Ovary (tissue), 10 donors: ENCODE measurements at regions of chr16 and their contacts with region 1.

Region 1: DNA sequence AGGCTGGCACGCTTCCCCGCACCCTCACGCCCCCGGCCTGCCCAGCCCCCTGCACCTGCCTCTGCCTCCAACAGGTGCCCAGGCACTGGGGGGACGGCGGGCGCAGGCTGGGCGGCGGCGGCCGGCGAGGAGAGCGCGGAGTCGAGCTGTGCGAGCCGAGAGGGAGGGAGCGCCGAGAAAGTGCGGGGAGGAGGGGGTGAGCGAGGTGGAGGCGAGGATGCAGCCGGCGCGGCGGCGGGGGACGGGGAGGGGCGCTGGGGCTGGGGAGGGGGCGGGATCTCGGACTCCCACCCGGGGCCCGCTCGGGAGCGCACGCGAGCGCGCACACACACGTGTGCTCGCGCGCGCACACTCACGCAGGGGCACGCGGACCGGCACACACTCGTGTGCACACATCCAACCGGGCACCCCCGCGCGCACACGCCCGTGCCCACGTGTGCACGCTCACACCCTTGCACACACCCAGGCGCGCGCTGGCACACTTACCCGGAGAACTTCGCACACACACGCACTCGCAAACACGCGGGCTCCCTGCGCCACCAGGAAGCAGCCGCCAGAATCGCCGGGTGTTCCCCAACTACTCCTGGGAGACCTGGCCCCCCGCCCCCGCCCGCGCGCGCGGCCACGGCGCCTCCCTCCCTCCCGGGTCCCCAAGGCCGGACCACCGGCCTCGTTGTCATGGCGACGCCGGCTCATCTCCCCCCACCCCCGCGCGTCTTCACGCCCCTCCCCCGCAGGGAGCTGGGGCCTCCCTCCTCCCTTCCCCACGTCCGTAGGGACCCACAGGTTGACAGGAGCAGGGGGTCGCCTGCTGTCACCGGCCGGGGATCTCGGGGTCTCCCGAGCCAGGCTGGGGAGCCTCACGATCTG is at the start of gene DOC2A:
- DNase-seq: peak in 1 of 5 donors; percentile 57
- H3K4me3 ChIP-seq: peak within 1 kb of the TSS; percentile 29
- H3K27ac ChIP-seq: no peak within 1 kb of the TSS
- H3K4me1 ChIP-seq: no peaks in the 10 kb centered on the region
- H3K27me3 ChIP-seq: no peaks in the 10 kb centered on the region
- CTCF ChIP-seq: no peak
- EP300 ChIP-seq: no peak
- POLR2A ChIP-seq: no peak
- total RNA-seq, gene DOC2A: 1.4 to 7.2 (median 4.7) TPM

Region 2: GRCh38 chr16:29883987-29884386 is 127.1 kb before region 1 on chr16:
- intact Hi-C with region 1: loop called in 1 of 4 experiments (anchors 10 kb)
- DNase-seq: no peak
- H3K4me3 ChIP-seq: no peak overlapping the region
- H3K27ac ChIP-seq: no peak overlapping the region
- H3K4me1 ChIP-seq: no peaks in the 10 kb centered on the region
- H3K27me3 ChIP-seq: no peaks in the 10 kb centered on the region
- CTCF ChIP-seq: no peak
- EP300 ChIP-seq: no peak
- POLR2A ChIP-seq: no peak

Region 3: GRCh38 chr16:29968205-29968604 is 42.9 kb before region 1 on chr16:
- intact Hi-C with region 1: loop called in 1 of 4 experiments (anchors 5 kb)
- DNase-seq: no peak
- H3K4me3 ChIP-seq: no peak overlapping the region
- H3K27ac ChIP-seq: no peak overlapping the region
- H3K4me1 ChIP-seq: peaks cover 1% of the 10 kb centered on the region
- H3K27me3 ChIP-seq: no peaks in the 10 kb centered on the region
- CTCF ChIP-seq: no peak
- EP300 ChIP-seq: no peak
- POLR2A ChIP-seq: no peak